ENCODE measurements at regions of chr12 and their contacts with region 1.

Region 1: DNA sequence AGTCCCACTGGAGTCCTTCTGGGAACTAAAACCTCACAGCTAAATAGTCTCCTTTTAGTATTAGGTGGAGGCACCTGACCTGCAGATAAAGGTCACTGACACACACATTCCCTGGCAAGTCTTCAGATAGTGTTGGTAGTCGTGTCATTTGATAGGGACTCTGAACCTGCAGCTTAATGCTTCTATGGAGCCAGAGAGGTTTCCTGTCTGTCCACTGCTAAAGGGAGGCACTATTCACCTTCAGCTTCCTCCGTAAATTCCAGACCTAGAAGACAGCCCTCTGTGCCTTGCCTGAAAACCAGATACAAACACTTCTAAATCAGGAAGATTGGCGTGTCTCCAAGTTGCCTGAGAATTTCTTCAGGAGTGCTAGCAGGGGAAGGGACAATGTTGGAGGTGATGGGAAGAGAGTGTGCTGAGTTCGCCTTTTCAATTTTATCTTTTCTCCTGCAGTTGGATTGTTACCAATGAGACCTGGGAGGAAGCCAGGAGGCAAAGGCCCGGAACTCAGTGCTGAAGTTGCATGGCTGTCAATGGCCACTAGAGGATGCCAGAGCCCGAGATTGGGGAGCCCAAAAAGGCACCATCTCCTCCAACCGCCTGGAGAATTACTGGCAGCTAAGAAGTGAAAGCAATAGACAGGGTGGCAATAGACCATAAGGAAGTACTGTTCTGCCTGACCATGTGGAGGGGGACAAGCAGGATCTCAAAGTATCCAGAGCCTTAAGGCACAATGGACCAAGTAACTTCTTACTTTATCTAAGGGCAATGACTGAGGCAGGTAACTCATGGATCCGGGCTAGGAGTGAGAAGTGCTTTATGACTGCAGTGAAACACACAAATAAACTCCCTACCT is 81.6 kb upstream of the SCAF11 start:
- DNase-seq: peak; percentile 39
- ATAC-seq: peak; percentile 96
- H3K4me3 Mint-ChIP-seq: no peak overlapping the region
- H3K27ac Mint-ChIP-seq: peak overlapping the region; percentile 61
- H3K4me1 Mint-ChIP-seq: peaks cover 12% of the 10 kb centered on the region
- H3K27me3 Mint-ChIP-seq: peaks cover 4% of the 10 kb centered on the region
- CTCF ChIP-seq: peak; percentile 88

Region 2: DNA sequence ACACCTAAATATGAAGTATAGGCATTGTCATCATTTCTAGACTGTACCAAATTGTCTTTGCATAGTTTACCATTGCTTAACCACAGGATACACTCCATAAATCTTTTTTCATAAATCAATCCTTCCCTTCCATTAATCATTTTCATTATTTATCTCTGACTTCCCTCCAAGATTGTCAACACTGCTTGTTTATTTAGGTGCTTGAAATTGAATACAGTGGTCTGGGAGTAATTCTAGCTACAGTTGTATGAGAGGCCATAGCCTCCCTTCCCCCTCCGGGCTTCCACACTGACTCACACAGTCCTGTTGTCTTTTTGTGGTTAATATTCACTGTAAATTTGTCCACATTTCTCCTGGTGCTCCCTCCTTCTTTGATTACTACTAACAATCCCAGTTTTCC is 456.7 kb before region 1 on chr12:
- CTCF ChIA-PET with region 1: no interaction called
- POLR2A ChIA-PET with region 1: no interaction called
- intact Hi-C with region 1: no loop called
- DNase-seq: no peak
- ATAC-seq: no peak
- H3K4me3 Mint-ChIP-seq: no peak overlapping the region
- H3K27ac Mint-ChIP-seq: no peak overlapping the region
- H3K4me1 Mint-ChIP-seq: peaks cover 15% of the 10 kb centered on the region
- H3K27me3 Mint-ChIP-seq: no peaks in the 10 kb centered on the region
- CTCF ChIP-seq: no peak

Region 3: GRCh38 chr12:46108721-46109120 is 36.7 kb after region 1 on chr12:
- CTCF ChIA-PET with region 1: interaction called, 4 read pairs
- POLR2A ChIA-PET with region 1: no interaction called
- intact Hi-C with region 1: loop called (anchors 2 kb)
- DNase-seq: no peak
- ATAC-seq: peak; percentile 87
- H3K4me3 Mint-ChIP-seq: peak overlapping the region; percentile 60
- H3K27ac Mint-ChIP-seq: peak overlapping the region; percentile 85
- H3K4me1 Mint-ChIP-seq: peaks cover 49% of the 10 kb centered on the region
- H3K27me3 Mint-ChIP-seq: no peaks in the 10 kb centered on the region
- CTCF ChIP-seq: no peak

Region 4: DNA sequence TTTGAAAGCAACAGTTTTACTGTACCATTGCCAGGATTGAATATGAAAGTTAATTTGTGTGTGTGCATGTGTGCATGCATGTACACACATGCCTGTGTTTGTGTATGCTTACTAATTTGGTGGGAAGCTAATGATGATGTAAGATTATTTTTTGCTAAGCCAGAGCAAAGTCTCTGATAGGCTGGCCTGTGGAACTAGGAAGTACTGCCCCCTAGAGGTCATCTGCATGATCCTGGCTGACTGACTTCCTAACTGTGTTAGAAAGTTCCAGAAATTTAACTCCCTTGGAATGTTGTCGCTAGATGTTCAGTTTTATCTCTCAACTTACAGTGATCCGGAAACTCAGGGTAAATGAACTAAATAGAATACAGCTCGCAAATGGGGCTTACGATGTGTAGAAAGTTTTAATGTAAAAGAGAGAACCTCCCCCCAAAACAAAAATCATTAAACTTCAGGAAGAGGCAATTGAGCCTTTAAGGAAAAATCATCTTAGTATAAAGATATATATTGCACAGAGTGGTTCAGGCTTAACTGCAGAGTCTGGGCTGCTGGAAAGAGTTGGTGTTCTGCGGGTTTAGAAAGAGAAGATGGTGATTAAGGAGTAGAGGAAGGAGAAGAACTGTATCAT is 231.2 kb after region 1 on chr12:
- CTCF ChIA-PET with region 1: interaction called, 7 read pairs
- POLR2A ChIA-PET with region 1: no interaction called
- intact Hi-C with region 1: loop called (anchors 1 kb)
- DNase-seq: no peak
- ATAC-seq: peak; percentile 74
- H3K4me3 Mint-ChIP-seq: no peak overlapping the region
- H3K27ac Mint-ChIP-seq: peak overlapping the region; percentile 20
- H3K4me1 Mint-ChIP-seq: peaks cover 31% of the 10 kb centered on the region
- H3K27me3 Mint-ChIP-seq: no peaks in the 10 kb centered on the region
- CTCF ChIP-seq: peak; percentile 30

Region 5: DNA sequence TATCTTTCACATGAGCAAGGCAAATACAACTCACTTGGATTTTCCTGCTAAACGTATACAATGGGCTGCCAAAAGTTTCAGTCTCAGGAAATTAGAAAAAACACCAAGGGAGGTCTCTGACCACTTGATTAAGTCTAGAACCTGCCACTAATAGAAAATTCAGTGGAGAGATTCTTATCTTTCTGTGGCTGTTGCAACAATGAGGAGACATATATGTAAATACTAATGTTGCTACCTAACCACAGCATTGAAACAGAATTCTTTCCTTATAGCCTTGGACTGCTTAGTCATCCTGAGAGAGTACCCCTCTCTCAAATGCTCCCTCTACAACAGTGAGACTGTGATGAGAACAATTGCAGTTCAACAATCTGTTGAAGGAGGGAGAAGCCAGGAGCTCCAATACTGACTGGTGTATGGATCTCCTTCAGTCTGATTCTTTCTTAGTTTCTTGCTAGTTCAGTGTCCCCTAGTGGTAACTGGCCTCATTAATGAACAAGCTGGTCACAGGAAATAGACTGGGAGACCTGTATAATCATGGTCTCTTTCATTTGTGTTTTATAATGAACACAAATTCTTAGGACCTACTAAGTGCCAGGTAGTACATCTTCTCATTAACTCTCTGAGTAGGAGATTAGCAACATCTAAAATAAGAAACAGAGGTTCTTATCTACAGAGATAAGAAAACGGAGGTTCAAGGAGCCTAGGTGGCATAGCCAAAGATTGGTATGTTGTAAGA is 589.3 kb after region 1 on chr12:
- CTCF ChIA-PET with region 1: interaction called, 3 read pairs
- POLR2A ChIA-PET with region 1: no interaction called
- intact Hi-C with region 1: loop called (anchors 1 kb)
- DNase-seq: no peak
- ATAC-seq: peak; percentile 94
- H3K4me3 Mint-ChIP-seq: peak overlapping the region; percentile 3
- H3K27ac Mint-ChIP-seq: no peak overlapping the region
- H3K4me1 Mint-ChIP-seq: peaks cover 31% of the 10 kb centered on the region
- H3K27me3 Mint-ChIP-seq: no peaks in the 10 kb centered on the region
- CTCF ChIP-seq: no peak

Region 6: GRCh38 chr12:46933947-46934346 is 862.0 kb after region 1 on chr12:
- CTCF ChIA-PET with region 1: interaction called, 5 read pairs
- POLR2A ChIA-PET with region 1: no interaction called
- intact Hi-C with region 1: loop called (anchors 1 kb)
- DNase-seq: no peak
- ATAC-seq: no peak
- H3K4me3 Mint-ChIP-seq: no peak overlapping the region
- H3K27ac Mint-ChIP-seq: no peak overlapping the region
- H3K4me1 Mint-ChIP-seq: no peaks in the 10 kb centered on the region
- H3K27me3 Mint-ChIP-seq: peaks cover 17% of the 10 kb centered on the region
- CTCF ChIP-seq: no peak

Region 7: GRCh38 chr12:46983393-46984266 is 911.6 kb after region 1 on chr12:
- CTCF ChIA-PET with region 1: interaction called, 12 read pairs
- POLR2A ChIA-PET with region 1: no interaction called
- intact Hi-C with region 1: loop called (anchors 1 kb)
- DNase-seq: no peak
- ATAC-seq: peak; percentile 56
- H3K4me3 Mint-ChIP-seq: no peak overlapping the region
- H3K27ac Mint-ChIP-seq: no peak overlapping the region
- H3K4me1 Mint-ChIP-seq: peaks cover 7% of the 10 kb centered on the region
- H3K27me3 Mint-ChIP-seq: peaks cover 14% of the 10 kb centered on the region
- CTCF ChIP-seq: peak; percentile 28

Region 8: DNA sequence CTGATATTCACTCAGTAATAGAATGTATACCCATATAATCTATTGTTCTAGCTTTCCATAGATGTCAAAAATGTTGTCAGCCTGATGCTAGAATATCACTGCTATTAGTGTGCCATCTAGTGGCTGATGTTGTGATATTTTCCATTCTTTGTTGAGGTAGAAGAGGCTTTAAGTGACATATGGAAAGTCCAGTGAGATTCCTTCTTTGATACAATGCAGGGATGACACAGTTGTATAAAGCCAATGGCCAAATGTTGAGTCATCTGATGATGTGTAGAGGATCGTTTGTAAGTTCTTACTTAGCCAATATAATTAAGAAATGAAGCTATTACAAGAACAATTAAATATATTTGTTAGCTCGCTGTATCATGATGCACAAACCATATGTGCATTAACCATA is 949.3 kb after region 1 on chr12:
- CTCF ChIA-PET with region 1: interaction called, 33 read pairs
- POLR2A ChIA-PET with region 1: no interaction called
- intact Hi-C with region 1: loop called (anchors 1 kb)
- DNase-seq: no peak
- ATAC-seq: no peak
- H3K4me3 Mint-ChIP-seq: no peak overlapping the region
- H3K27ac Mint-ChIP-seq: no peak overlapping the region
- H3K4me1 Mint-ChIP-seq: no peaks in the 10 kb centered on the region
- H3K27me3 Mint-ChIP-seq: peaks cover 3% of the 10 kb centered on the region
- CTCF ChIP-seq: peak; percentile 52